ENCODE measurements at regions of chr16 and their contacts with region 1.

Region 1: GRCh38 chr16:84484579-84485254 is 19.7 kb downstream of the MEAK7 start:
- DNase-seq: no peak
- H3K4me3 ChIP-seq: no peak overlapping the region
- H3K27ac ChIP-seq: no peak overlapping the region
- H3K4me1 ChIP-seq: peaks cover 0 to 4% (median 0%) of the 10 kb centered on the region in 4 donors
- H3K27me3 ChIP-seq: no peaks in the 10 kb centered on the region
- CTCF ChIP-seq: peak; percentile 66 to 84 (median 72)
- EP300 ChIP-seq: no peak
- POLR2A ChIP-seq: no peak

Region 2: DNA sequence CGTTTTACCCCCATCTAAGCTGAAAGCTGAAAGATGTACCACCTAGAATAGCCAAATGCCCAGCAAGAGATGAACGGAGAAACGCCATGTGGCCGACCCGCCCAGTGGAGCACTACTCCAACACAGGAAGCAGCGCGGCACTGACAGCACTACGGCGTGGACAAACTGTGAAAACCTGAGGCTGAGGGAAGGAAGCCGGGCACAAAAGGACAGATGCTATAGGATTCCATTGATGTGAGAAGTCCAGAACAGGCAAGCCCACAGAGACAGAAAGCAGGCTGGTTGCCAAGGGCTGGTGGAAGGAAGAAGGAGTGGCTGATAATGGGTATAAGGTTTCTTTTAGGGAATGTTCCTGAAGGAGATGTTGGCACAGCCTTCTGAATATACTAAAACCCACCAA is 412.7 kb before region 1 on chr16:
- intact Hi-C with region 1: loop called (anchors 10 kb)
- DNase-seq: no peak
- H3K4me3 ChIP-seq: no peak overlapping the region
- H3K27ac ChIP-seq: no peak overlapping the region
- H3K4me1 ChIP-seq: no peaks in the 10 kb centered on the region
- H3K27me3 ChIP-seq: no peaks in the 10 kb centered on the region
- CTCF ChIP-seq: no peak
- EP300 ChIP-seq: no peak
- POLR2A ChIP-seq: no peak

Region 3: DNA sequence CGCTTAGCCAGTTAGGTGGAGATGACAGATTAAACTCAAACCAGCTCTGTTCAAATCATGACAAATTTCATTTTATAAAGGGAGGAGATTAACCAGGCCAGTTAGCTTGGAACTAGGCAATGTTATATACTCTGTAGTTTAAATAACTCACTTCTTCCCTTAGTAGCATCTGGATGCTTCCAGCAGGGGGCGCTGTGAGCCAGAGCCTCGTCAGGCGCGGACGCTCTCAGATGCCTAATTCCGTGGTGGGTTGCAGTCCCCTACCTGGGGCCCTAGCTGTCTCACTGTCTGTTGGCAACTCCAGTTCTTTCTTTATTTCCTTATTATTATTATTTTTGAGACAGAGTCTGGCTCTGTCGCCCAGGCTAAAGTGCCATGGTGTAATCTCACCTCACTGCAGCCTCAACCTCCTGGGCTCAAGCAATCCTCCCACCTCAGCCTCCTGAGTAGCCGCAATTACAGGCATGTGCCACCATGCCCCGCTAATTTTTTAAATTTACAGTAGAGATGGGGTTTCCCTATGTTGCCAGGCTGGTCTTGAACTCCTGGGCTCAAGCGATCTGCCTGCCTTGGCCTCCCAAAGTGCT is 207.4 kb before region 1 on chr16:
- intact Hi-C with region 1: loop called (anchors 2 kb)
- DNase-seq: peak; percentile 80
- H3K4me3 ChIP-seq: no peak overlapping the region
- H3K27ac ChIP-seq: no peak overlapping the region
- H3K4me1 ChIP-seq: peaks cover 0 to 5% (median 0%) of the 10 kb centered on the region in 4 donors
- H3K27me3 ChIP-seq: no peaks in the 10 kb centered on the region
- CTCF ChIP-seq: peak; percentile 82 to 93 (median 88)
- EP300 ChIP-seq: no peak
- POLR2A ChIP-seq: no peak